Colonic mucosa (tissue), 4 donors: ENCODE measurements at regions of chr21 and their contacts with region 1.

Region 1: DNA sequence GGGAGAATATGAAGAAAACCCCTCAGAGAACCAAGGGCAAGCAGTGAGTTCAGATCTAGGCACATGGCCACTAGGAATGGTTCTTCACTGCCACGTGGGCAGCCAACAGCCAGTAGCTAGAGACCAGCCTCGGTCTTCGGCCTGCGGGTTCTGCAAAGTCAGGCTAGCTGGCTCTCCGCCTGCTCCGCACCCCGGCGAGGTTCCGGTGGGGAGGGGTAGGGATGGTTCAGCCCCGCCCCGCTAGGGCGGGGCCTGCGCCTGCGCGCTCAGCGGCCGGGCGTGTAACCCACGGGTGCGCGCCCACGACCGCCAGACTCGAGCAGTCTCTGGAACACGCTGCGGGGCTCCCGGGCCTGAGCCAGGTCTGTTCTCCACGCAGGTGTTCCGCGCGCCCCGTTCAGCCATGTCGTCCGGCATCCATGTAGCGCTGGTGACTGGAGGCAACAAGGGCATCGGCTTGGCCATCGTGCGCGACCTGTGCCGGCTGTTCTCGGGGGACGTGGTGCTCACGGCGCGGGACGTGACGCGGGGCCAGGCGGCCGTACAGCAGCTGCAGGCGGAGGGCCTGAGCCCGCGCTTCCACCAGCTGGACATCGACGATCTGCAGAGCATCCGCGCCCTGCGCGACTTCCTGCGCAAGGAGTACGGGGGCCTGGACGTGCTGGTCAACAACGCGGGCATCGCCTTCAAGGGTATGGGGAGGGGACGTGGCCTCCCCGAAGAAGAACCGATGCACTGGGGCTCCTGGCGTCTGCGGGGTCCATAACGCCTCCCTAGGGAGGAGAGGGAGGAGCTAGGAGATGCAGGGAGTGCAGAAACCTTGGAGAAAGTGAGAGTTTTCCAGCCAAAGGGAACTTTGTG is at the start of gene CBR1:
- DNase-seq: peak; percentile 97
- H3K4me3 ChIP-seq: peak within 1 kb of the TSS; percentile 75
- H3K27ac ChIP-seq: peak within 1 kb of the TSS; percentile 60
- H3K4me1 ChIP-seq: no peaks in the 10 kb centered on the region
- H3K27me3 ChIP-seq: no peaks in the 10 kb centered on the region
- CTCF ChIP-seq: no peak
- total RNA-seq, gene CBR1: 81.6 to 131 TPM

Region 2: GRCh38 chr21:36113647-36114428 is 43.9 kb after region 1 on chr21:
- intact Hi-C with region 1: loop called (anchors 5 kb)
- DNase-seq: peak; percentile 90
- H3K4me3 ChIP-seq: peak overlapping the region; percentile 38
- H3K27ac ChIP-seq: peak overlapping the region; percentile 2
- H3K4me1 ChIP-seq: no peaks in the 10 kb centered on the region
- H3K27me3 ChIP-seq: no peaks in the 10 kb centered on the region
- CTCF ChIP-seq: no peak